ENCODE measurements at regions of chr14 and their contacts with region 1.

Region 1: GRCh38 chr14:102878174-102878969 is 44.1 kb upstream of the AMN start:
- DNase-seq: no peak
- ATAC-seq: no peak
- H3K4me3 ChIP-seq: no peak overlapping the region
- H3K27ac ChIP-seq: no peak overlapping the region
- H3K4me1 ChIP-seq: peaks cover 8% of the 10 kb centered on the region
- H3K27me3 ChIP-seq: no peaks in the 10 kb centered on the region
- CTCF ChIP-seq: no peak
- POLR2A ChIP-seq: no peak
- RAD21 ChIP-seq: no peak

Region 2: GRCh38 chr14:102838530-102838929 is 39.8 kb before region 1 on chr14:
- CTCF ChIA-PET with region 1: no interaction called
- POLR2A ChIA-PET with region 1: no interaction called
- dilution Hi-C with region 1: no loop called
- in situ Hi-C with region 1: no loop called
- intact Hi-C with region 1: loop called (anchors 5 kb)
- DNase-seq: no peak
- ATAC-seq: no peak
- H3K4me3 ChIP-seq: no peak overlapping the region
- H3K27ac ChIP-seq: no peak overlapping the region
- H3K4me1 ChIP-seq: no peaks in the 10 kb centered on the region
- H3K27me3 ChIP-seq: no peaks in the 10 kb centered on the region
- CTCF ChIP-seq: no peak
- POLR2A ChIP-seq: no peak
- RAD21 ChIP-seq: no peak

Measured in IMR-90 (cell line).